PC-9 (cell line): ENCODE measurements at regions of chr10 and their contacts with region 1.

Region 1: GRCh38 chr10:94500063-94500462 is 45.5 kb upstream of the HELLS start:
- DNase-seq: no peak
- H3K4me3 ChIP-seq: no peak overlapping the region
- H3K27ac ChIP-seq: no peak overlapping the region
- H3K4me1 ChIP-seq: no peaks in the 10 kb centered on the region
- H3K27me3 ChIP-seq: no peaks in the 10 kb centered on the region
- CTCF ChIP-seq: peak; percentile 33; the same call in 1 of the 2 replicates

Region 2: DNA sequence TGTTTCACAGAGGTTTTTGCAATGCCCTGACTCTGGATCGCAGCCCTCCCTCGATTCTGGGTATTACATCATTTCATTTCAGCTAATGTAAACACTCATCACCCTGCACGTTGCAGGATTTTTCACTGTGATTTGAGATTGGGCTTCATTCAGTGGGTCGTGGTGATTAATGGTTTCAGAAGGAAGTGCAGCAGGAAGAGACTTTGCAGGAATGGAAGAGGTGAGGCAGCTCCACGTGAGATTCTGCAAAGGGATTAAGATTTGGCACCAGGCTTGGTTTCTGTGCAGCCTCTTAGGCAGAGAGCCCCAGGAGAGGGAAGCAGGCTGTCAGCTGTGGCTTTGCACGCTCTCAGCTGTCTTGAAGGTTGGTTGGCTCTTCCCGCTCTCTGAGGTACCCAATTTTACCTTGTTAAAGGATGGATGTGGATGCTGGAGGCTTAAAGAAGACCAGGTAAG is 411.1 kb before region 1 on chr10:
- CTCF ChIA-PET with region 1: no interaction called
- POLR2A ChIA-PET with region 1: no interaction called
- intact Hi-C with region 1: no loop called
- DNase-seq: no peak
- H3K4me3 ChIP-seq: no peak overlapping the region
- H3K27ac ChIP-seq: no peak overlapping the region
- H3K4me1 ChIP-seq: no peaks in the 10 kb centered on the region
- H3K27me3 ChIP-seq: no peaks in the 10 kb centered on the region
- CTCF ChIP-seq: no peak

Region 3: GRCh38 chr10:94481410-94481809 is 18.7 kb before region 1 on chr10:
- CTCF ChIA-PET with region 1: no interaction called
- POLR2A ChIA-PET with region 1: interaction called, 13 read pairs
- intact Hi-C with region 1: no loop called
- DNase-seq: peak in 1 of 2 experiments; percentile 37
- H3K4me3 ChIP-seq: no peak overlapping the region
- H3K27ac ChIP-seq: no peak overlapping the region
- H3K4me1 ChIP-seq: no peaks in the 10 kb centered on the region
- H3K27me3 ChIP-seq: no peaks in the 10 kb centered on the region
- CTCF ChIP-seq: no peak

Region 4: DNA sequence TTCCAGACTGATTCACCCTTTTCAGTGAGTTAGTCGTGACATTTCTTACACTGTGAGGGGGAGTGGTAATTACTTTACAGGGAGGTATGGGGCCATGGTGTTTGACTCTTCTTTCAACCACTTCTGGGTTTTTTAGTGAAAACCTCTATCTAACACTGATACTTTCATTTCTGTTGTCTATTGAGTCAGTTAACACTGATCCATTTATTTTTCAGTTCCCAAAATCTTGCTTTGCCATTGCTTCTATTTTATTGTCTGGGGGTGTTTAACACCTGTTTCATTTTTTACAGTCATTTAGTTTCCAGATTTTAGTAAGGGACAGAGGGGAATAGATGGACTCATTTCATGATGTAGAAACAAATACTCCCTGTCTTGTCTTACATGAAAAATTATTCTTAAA is 107.0 kb after region 1 on chr10:
- CTCF ChIA-PET with region 1: no interaction called
- POLR2A ChIA-PET with region 1: no interaction called
- intact Hi-C with region 1: no loop called
- DNase-seq: no peak
- H3K4me3 ChIP-seq: no peak overlapping the region
- H3K27ac ChIP-seq: no peak overlapping the region
- H3K4me1 ChIP-seq: no peaks in the 10 kb centered on the region
- H3K27me3 ChIP-seq: no peaks in the 10 kb centered on the region
- CTCF ChIP-seq: no peak

Region 5: DNA sequence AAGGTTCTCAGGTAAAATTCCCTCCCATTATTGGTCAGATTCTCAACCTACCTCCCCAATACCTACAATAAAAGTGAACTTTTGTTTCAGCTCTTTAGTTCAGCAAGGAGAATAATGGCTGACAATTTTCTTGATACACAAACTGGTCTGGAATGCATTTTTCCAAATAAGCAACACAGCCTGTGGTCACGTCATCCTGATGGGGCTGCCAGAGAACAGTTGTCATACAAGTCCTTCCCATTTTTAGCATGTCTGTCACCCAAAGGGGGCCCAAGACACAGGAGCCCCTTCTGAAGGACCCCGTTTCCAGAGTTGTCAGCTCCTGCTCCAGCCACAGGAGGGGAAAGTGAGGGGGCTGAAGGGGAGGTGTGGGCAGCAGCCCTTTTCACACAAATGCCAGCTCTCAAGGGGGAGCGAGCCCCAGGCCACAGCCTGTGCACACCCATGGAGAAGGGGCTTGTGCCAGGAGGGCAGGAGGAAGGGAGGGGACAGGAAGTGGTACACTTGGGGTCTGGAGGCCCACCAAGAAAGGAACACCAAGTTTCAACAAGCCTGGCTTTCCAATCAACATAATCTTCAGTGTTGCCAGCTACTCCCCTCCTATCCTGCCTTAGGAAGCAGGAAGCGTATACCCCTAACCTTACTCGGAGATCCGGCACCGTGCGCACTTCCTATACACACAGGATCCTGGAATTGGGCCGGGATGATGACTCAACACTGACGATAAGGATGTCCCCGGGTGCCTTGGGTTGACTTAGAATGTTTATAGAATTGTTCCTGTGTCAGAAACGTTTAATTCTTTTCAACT is 834.1 kb after region 1 on chr10:
- CTCF ChIA-PET with region 1: no interaction called
- POLR2A ChIA-PET with region 1: no interaction called
- intact Hi-C with region 1: no loop called
- DNase-seq: peak in 1 of 2 experiments; percentile 32
- H3K4me3 ChIP-seq: no peak overlapping the region
- H3K27ac ChIP-seq: no peak overlapping the region
- H3K4me1 ChIP-seq: peaks cover 19% of the 10 kb centered on the region
- H3K27me3 ChIP-seq: no peaks in the 10 kb centered on the region
- CTCF ChIP-seq: no peak